ENCODE measurements at regions of chr10 and their contacts with region 1.

Region 1: DNA sequence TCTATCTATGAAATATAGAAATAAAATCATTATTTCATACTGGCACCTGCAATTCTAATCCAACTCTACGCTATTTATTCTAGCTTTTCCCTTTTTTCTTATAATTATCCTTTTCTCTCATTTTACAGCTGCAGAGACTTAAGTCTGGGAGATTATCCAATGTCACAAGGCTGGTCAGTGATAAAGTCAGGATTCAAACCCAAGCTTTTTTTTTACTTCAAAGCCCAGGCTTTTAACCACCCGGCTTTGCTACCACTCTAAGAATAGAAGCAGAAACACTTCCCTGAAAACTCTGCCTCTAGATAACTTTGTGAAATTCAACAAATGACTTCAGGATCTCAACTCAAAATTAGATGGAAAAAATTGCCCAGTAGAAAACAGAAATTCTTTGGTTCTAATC is 552.5 kb downstream of the IPMK start:
- DNase-seq: no peak
- H3K4me3 ChIP-seq: no peak overlapping the region
- H3K27ac ChIP-seq: no peak overlapping the region
- H3K4me1 ChIP-seq: no peaks in the 10 kb centered on the region
- H3K27me3 ChIP-seq: no peaks in the 10 kb centered on the region
- CTCF ChIP-seq: no peak
- EP300 ChIP-seq: no peak
- POLR2A ChIP-seq: no peak

Region 2: DNA sequence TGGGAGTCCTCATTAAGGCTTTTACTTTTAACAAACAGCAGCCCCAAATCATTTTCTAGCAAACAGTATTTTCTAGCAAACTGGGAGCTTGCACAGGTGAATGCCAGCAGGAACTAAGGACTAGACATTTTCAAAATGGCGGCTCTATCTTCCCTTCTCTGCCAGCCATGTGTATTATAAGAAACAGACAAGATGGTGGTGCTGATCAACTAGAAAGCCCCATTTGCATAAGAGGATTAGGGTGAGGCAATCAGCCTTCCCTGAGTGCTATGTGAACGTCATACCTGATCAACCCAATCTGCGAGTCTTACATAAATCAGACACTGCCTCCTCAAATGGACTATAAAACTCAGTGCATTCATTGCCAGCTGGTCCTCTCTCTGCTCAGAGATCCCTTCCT is 72.9 kb after region 1 on chr10:
- in situ Hi-C with region 1: no loop called
- intact Hi-C with region 1: loop called (anchors 2 kb)
- DNase-seq: no peak
- H3K4me3 ChIP-seq: no peak overlapping the region
- H3K27ac ChIP-seq: no peak overlapping the region
- H3K4me1 ChIP-seq: no peaks in the 10 kb centered on the region
- H3K27me3 ChIP-seq: no peaks in the 10 kb centered on the region
- CTCF ChIP-seq: no peak
- EP300 ChIP-seq: no peak
- POLR2A ChIP-seq: no peak